ENCODE measurements at regions of chrX and their contacts with region 1.

Region 1: DNA sequence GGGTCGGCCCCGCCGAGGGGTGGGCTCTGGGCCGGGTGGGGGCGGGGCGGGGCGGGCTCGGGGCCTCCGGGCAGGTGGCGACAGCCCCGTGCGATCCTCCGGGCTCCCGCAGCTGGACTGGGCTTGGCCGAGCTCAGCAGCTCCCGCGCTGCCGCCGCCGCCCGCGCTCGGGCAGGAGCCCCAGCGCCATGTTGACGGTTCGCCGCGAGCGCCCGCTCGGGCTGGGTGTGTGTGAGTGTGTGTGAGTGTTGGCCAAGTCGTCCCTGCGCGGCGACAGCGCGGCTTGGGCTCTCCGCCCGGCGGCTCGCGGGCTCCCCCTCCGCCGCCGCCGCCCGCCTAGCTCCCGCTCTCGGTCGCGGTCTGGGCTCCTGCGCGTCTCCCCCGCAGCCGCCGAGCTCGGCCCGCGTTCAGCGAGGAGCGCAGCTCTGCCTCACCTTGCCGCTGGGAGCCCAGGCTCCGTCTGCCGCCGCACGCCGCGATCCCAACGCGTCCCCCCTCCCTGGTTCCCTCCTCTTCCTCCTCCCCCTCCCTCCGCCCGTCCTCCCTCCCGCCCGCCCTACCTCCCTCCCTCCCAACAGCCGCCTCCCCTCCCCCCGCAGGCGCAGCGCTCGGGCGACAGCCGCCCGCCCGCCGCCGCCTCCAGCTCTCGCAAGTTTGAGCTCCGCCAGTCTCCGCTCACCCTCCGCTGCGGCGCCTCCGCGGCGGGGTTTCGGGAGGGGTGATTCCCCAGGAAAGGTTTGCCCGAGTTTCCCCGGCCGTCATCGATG is at the start of gene BCOR:
- H3K4me3 Mint-ChIP-seq: peak within 1 kb of the TSS; percentile 83
- H3K27ac Mint-ChIP-seq: peak within 1 kb of the TSS; percentile 84
- H3K4me1 Mint-ChIP-seq: peaks cover 44% of the 10 kb centered on the region
- H3K27me3 Mint-ChIP-seq: peaks cover 4% of the 10 kb centered on the region

Region 2: GRCh38 chrX:40013266-40014195 is 84.1 kb before region 1 on chrX:
- intact Hi-C with region 1: loop called (anchors 10 kb)
- H3K4me3 Mint-ChIP-seq: peak overlapping the region; percentile 86
- H3K27ac Mint-ChIP-seq: peak overlapping the region; percentile 68
- H3K4me1 Mint-ChIP-seq: peaks cover 37% of the 10 kb centered on the region
- H3K27me3 Mint-ChIP-seq: peaks cover 49% of the 10 kb centered on the region

Region 3: GRCh38 chrX:40175511-40176350 is 78.1 kb after region 1 on chrX:
- intact Hi-C with region 1: loop called (anchors 2 kb)
- H3K4me3 Mint-ChIP-seq: peak overlapping the region; percentile 65
- H3K27ac Mint-ChIP-seq: peak overlapping the region; percentile 91
- H3K4me1 Mint-ChIP-seq: peaks cover 55% of the 10 kb centered on the region
- H3K27me3 Mint-ChIP-seq: peaks cover 4% of the 10 kb centered on the region

Region 4: GRCh38 chrX:40484408-40485091 is 386.9 kb after region 1 on chrX:
- intact Hi-C with region 1: no loop called
- H3K4me3 Mint-ChIP-seq: no peak overlapping the region
- H3K27ac Mint-ChIP-seq: no peak overlapping the region
- H3K4me1 Mint-ChIP-seq: no peaks in the 10 kb centered on the region
- H3K27me3 Mint-ChIP-seq: peaks cover 6% of the 10 kb centered on the region

Measured in dendritic cell treated with granulocyte-macrophage colony-stimulating factor and Interleukin-4, amounts not matched to agents 40 ng/mL and 50 ng/mL, for 4 days (primary cell).